AG04450 (cell line): ENCODE measurements at regions of chr13 and their contacts with region 1.

Region 1: GRCh38 chr13:94272038-94272437 is 207.4 kb downstream of the DCT start:
- DNase-seq: peak; percentile 21
- H3K4me3 ChIP-seq: no peak overlapping the region
- H3K27ac ChIP-seq: no peak overlapping the region
- H3K27me3 ChIP-seq: no peaks in the 10 kb centered on the region
- CTCF ChIP-seq: no peak

Region 2: GRCh38 chr13:94178625-94179244 is 93.3 kb before region 1 on chr13:
- CTCF ChIA-PET with region 1: interaction called, 15 read pairs
- POLR2A ChIA-PET with region 1: no interaction called
- DNase-seq: no peak
- H3K4me3 ChIP-seq: no peak overlapping the region
- H3K27ac ChIP-seq: no peak overlapping the region
- H3K27me3 ChIP-seq: no peaks in the 10 kb centered on the region
- CTCF ChIP-seq: no peak

Region 3: DNA sequence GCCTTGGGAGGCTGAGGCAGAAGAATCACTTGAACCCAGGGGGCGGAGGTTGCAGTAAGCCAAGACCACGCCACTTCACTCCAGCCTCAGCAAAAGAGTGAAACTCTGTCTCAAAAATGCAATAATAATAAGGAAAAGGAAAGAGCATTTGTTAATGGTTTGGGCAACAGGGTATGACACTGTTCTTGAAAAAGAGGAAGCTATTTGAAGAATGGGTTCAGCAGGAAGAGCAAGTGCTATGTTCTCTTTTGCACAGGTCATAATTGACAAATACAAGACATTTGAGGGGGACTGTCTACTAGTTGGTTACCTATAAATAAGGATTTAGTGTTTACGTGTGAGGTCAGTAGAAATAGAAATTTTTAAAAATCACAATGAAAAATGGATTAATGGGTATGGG is 10.9 kb before region 1 on chr13:
- CTCF ChIA-PET with region 1: no interaction called
- POLR2A ChIA-PET with region 1: no interaction called
- DNase-seq: no peak
- H3K4me3 ChIP-seq: no peak overlapping the region
- H3K27ac ChIP-seq: no peak overlapping the region
- H3K27me3 ChIP-seq: no peaks in the 10 kb centered on the region
- CTCF ChIP-seq: no peak